ENCODE measurements at regions of chr7 and their contacts with region 1.

Region 1: DNA sequence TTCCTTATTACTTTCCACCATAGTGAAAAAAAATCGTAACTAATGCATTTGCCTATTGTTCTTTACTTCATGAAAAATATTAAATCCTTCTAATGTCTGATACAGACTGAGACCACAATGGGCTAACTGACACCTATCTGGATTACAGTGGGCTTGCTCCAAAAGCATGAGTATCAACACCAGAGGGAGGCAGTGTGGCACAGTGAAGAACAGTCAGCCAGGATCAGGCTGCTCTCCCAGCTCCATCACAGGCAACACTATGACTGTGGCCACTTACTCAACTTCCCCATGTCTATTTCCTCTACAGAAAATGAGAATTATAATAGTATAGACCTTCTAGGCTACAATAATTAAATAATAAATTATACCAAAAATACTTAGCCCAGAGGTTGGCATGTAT is 97.2 kb downstream of the SLC25A13 start:
- DNase-seq: peak; percentile 23
- ATAC-seq: peak; percentile 95
- H3K4me3 Mint-ChIP-seq: no peak overlapping the region
- H3K27ac Mint-ChIP-seq: no peak overlapping the region
- H3K4me1 Mint-ChIP-seq: peaks cover 3% of the 10 kb centered on the region
- H3K27me3 Mint-ChIP-seq: no peaks in the 10 kb centered on the region
- CTCF ChIP-seq: no peak

Region 2: GRCh38 chr7:96236198-96237039 is 11.7 kb after region 1 on chr7:
- CTCF ChIA-PET with region 1: interaction called, 11 read pairs
- POLR2A ChIA-PET with region 1: no interaction called
- DNase-seq: no peak
- ATAC-seq: no peak
- H3K4me3 Mint-ChIP-seq: no peak overlapping the region
- H3K27ac Mint-ChIP-seq: no peak overlapping the region
- H3K4me1 Mint-ChIP-seq: peaks cover 2% of the 10 kb centered on the region
- H3K27me3 Mint-ChIP-seq: no peaks in the 10 kb centered on the region
- CTCF ChIP-seq: no peak

Measured in WTC11 (cell line).